Ascending aorta (tissue), 2 donors: ENCODE measurements at regions of chr15 and their contacts with region 1.

Region 1: GRCh38 chr15:70271422-70272088 is 173.8 kb upstream of the TLE3 start:
- DNase-seq: peak; percentile 33 to 90
- H3K4me3 ChIP-seq: no peak overlapping the region
- H3K27ac ChIP-seq: peak overlapping the region; percentile 35 to 78
- H3K4me1 ChIP-seq: peaks cover 7 to 27% of the 10 kb centered on the region in 2 donors
- H3K27me3 ChIP-seq: no peaks in the 10 kb centered on the region
- CTCF ChIP-seq: no peak

Region 2: GRCh38 chr15:70156671-70157271 is 114.8 kb before region 1 on chr15:
- intact Hi-C with region 1: loop called (anchors 5 kb)
- DNase-seq: peak in 1 of 2 donors; percentile 81
- H3K4me3 ChIP-seq: peak overlapping the region in 1 of 2 donors; percentile 12
- H3K27ac ChIP-seq: peak overlapping the region in 1 of 2 donors; percentile 26
- H3K4me1 ChIP-seq: peaks cover 12 to 20% of the 10 kb centered on the region in 2 donors
- H3K27me3 ChIP-seq: no peaks in the 10 kb centered on the region
- CTCF ChIP-seq: no peak

Region 3: GRCh38 chr15:70376929-70377691 is 105.6 kb after region 1 on chr15:
- intact Hi-C with region 1: loop called (anchors 10 kb)
- DNase-seq: peak in 1 of 2 donors; percentile 66
- H3K4me3 ChIP-seq: peak overlapping the region; percentile 25 to 52
- H3K27ac ChIP-seq: peak overlapping the region; percentile 49 to 50
- H3K4me1 ChIP-seq: peaks cover 0 to 21% of the 10 kb centered on the region in 2 donors
- H3K27me3 ChIP-seq: no peaks in the 10 kb centered on the region
- CTCF ChIP-seq: no peak